Activated CD8-positive, alpha-beta T cell treated with anti-CD3 and anti-CD28 coated beads for 36 hours (primary cell): ENCODE measurements at regions of chr17 and their contacts with region 1.

Region 1: GRCh38 chr17:39153599-39154051 is 2.2 kb upstream of the PLXDC1 start:
- DNase-seq: peak; percentile 91
- ATAC-seq: peak; percentile 43
- H3K4me3 Mint-ChIP-seq: peak overlapping the region; percentile 86
- H3K27ac Mint-ChIP-seq: peak overlapping the region; percentile 89
- H3K4me1 Mint-ChIP-seq: peaks cover 33% of the 10 kb centered on the region
- H3K27me3 Mint-ChIP-seq: peaks cover 2% of the 10 kb centered on the region
- CTCF ChIP-seq: no peak

Region 2: GRCh38 chr17:38868817-38869525 is 284.7 kb before region 1 on chr17:
- CTCF ChIA-PET with region 1: interaction called, 5 read pairs
- POLR2A ChIA-PET with region 1: interaction called, 5 read pairs
- intact Hi-C with region 1: loop called (anchors 5 kb)
- DNase-seq: peak; percentile 94
- ATAC-seq: peak; percentile 48
- H3K4me3 Mint-ChIP-seq: peak overlapping the region; percentile 90
- H3K27ac Mint-ChIP-seq: peak overlapping the region; percentile 98
- H3K4me1 Mint-ChIP-seq: peaks cover 40% of the 10 kb centered on the region
- H3K27me3 Mint-ChIP-seq: peaks cover 1% of the 10 kb centered on the region
- CTCF ChIP-seq: no peak

Region 3: DNA sequence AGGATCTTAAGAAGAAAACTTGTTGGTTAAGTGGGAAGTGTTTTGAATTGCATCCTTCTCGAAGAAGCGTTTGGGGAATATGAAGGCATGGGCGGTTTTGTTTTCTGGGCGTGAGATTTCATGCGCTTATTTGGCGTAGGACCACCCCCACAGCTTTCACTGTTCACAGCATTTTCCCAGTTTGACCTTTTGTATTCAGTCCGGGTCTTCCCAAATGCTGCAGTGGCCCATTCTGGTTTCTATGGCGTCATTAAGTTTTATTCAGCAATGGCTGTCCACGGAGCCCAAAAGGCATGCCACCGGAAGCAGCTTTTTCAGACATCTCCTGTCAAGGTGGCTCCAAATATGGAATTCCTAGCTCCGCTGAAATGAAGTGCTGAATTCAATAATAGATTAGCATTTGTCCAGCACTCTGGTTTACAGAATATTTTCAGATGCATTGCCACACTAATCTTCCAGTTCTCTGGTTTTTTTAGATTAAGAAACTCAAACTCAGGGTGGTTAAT is 95.9 kb before region 1 on chr17:
- CTCF ChIA-PET with region 1: interaction called, 17 read pairs
- POLR2A ChIA-PET with region 1: no interaction called
- intact Hi-C with region 1: no loop called
- DNase-seq: no peak
- ATAC-seq: no peak
- H3K4me3 Mint-ChIP-seq: peak overlapping the region; percentile 75
- H3K27ac Mint-ChIP-seq: no peak overlapping the region
- H3K4me1 Mint-ChIP-seq: peaks cover 10% of the 10 kb centered on the region
- H3K27me3 Mint-ChIP-seq: no peaks in the 10 kb centered on the region
- CTCF ChIP-seq: no peak

Region 4: GRCh38 chr17:39094607-39095308 is 58.9 kb before region 1 on chr17:
- CTCF ChIA-PET with region 1: interaction called, 10 read pairs
- POLR2A ChIA-PET with region 1: interaction called, 10 read pairs
- intact Hi-C with region 1: no loop called
- DNase-seq: peak; percentile 79
- ATAC-seq: peak; percentile 66
- H3K4me3 Mint-ChIP-seq: peak overlapping the region; percentile 33
- H3K27ac Mint-ChIP-seq: peak overlapping the region; percentile 86
- H3K4me1 Mint-ChIP-seq: peaks cover 73% of the 10 kb centered on the region
- H3K27me3 Mint-ChIP-seq: no peaks in the 10 kb centered on the region
- CTCF ChIP-seq: no peak

Region 5: DNA sequence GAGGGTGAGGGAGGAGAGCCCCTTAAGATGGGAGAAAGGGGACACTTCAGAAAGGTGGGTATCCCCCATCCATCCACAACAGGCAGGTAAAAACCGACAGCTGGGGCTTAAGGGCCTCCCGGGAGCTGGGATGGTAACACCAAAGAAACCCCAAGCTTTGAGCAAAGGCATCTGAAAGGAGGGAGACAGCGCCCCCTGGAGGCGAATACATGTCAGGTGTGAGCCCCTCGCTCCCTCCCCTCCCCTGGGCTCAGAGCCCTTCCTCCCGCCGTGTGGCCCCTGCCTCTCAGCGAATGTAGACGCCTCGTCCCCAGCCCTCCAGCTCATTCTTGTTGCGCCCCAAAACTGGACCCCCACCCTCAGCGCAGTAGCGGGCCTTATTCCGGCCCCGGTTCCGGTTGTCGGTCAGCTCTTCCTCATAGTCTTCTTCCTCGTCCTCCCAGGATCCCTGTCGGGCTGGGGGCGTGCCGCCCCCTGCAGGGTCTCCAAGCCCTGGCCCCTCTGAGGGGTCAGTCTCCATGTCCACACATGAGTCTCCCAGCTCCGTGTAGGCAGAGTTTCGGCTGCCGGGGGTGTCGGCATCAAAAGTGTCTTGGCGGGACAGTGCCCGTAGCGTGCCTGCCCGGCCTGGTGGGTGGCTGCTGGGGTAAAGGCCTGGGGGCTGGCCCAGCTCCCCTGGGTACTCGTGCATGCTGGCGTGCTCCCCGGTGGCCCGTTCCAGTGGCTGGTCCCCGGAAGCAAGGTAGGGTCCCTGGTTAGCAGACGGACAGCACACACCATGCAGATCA is 21.5 kb after region 1 on chr17:
- CTCF ChIA-PET with region 1: interaction called, 99 read pairs
- POLR2A ChIA-PET with region 1: interaction called, 5 read pairs
- intact Hi-C with region 1: no loop called
- DNase-seq: peak; percentile 92
- ATAC-seq: peak; percentile 84
- H3K4me3 Mint-ChIP-seq: no peak overlapping the region
- H3K27ac Mint-ChIP-seq: no peak overlapping the region
- H3K4me1 Mint-ChIP-seq: peaks cover 10% of the 10 kb centered on the region
- H3K27me3 Mint-ChIP-seq: no peaks in the 10 kb centered on the region
- CTCF ChIP-seq: peak; percentile 91

Region 6: DNA sequence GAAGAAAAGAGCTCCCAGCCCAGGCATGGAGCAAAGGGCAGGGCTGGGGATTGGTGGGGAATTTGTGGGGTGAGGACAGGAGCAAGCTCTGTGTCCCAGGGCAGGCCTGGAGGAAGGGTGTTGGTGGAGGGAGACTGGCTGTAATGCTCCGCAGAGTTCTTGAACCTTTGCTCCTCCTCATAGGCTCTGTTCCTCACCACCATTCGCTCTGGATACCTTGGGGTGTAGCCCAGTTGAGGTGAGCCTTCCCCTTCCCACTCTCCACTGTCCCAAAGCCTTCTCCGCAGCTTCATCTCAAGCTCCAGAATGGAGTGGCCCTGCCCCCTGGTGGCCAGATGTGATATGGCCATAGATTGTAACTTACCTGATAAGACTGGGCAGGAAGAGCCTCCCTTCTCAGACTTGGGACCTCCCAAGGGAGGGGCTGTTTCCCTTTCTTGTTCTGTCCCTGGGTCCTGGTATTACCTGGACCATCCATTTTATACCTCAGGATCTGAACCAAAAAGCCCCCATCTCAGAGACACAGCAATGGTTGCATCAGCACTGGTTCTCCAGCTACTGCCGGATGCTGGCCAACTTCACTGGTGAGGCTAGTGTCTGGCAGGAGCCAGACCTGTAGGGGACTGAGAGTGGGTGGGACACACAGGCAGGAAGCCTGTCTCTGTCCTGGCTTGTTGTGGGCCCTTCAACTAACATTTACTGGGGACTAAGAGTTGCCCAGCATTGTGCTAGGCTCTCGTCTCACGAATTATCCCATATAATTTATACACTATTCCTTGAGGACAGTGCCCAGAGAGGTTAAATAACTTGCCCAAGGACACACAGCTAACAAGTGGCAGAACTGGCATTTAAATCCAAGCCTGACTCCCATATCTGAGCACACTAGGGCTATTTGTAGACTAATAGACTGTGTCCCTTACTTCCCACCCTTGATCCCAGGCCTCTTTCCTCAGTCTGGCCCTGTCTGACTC is 91.3 kb after region 1 on chr17:
- CTCF ChIA-PET with region 1: interaction called, 13 read pairs
- POLR2A ChIA-PET with region 1: interaction called, 3 read pairs
- intact Hi-C with region 1: no loop called
- DNase-seq: peak; percentile 96
- ATAC-seq: peak; percentile 96
- H3K4me3 Mint-ChIP-seq: no peak overlapping the region
- H3K27ac Mint-ChIP-seq: no peak overlapping the region
- H3K4me1 Mint-ChIP-seq: peaks cover 13% of the 10 kb centered on the region
- H3K27me3 Mint-ChIP-seq: no peaks in the 10 kb centered on the region
- CTCF ChIP-seq: peak; percentile 97